Lower lobe of right lung (tissue), 2 donors: ENCODE measurements at regions of chr1 and their contacts with region 1.

Region 1: DNA sequence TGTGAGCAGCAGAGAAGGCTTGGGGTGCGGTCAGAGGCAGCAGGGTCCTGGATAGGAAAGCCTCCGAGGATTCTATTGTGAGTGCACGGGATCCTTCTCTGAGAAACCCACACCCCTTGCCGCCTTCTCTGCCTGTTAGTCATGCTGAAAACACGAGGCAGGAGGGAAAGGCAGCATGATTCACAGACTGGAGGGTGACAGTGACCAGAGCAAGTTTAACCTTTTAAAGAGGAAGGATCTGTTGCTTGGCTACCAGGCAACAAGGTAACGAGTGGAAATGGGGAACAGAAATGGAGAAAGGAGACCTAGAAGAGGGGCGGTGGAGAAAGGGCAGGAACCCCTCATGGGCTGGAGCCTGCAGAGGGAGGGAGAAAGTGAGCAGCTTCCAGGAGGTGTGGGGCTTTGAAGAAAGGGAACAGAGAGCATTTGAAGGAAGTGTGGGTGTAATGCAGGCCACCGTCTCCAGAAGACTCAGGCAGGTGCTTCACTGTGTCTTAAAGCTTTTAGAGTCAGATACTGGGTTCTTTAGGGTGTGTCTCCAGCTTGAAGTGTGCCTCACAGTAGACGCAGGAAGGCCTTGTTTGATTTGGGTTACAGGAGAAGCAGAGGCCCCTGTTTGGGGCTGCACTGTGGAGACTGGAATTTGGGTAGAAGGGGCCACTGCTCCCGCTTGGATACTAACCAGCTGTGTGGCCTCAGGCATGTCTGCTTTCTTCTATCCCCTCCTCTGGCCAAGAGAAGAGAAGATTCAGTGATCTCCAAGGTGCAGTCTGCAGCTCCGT is 19.1 kb downstream of the OPTC start:
- DNase-seq: no peak
- ATAC-seq: peak; percentile 70 to 71
- H3K4me3 ChIP-seq: no peak overlapping the region
- H3K27ac ChIP-seq: no peak overlapping the region
- H3K4me1 ChIP-seq: peaks cover 28% of the 10 kb centered on the region
- H3K27me3 ChIP-seq: no peaks in the 10 kb centered on the region
- CTCF ChIP-seq: no peak

Region 2: DNA sequence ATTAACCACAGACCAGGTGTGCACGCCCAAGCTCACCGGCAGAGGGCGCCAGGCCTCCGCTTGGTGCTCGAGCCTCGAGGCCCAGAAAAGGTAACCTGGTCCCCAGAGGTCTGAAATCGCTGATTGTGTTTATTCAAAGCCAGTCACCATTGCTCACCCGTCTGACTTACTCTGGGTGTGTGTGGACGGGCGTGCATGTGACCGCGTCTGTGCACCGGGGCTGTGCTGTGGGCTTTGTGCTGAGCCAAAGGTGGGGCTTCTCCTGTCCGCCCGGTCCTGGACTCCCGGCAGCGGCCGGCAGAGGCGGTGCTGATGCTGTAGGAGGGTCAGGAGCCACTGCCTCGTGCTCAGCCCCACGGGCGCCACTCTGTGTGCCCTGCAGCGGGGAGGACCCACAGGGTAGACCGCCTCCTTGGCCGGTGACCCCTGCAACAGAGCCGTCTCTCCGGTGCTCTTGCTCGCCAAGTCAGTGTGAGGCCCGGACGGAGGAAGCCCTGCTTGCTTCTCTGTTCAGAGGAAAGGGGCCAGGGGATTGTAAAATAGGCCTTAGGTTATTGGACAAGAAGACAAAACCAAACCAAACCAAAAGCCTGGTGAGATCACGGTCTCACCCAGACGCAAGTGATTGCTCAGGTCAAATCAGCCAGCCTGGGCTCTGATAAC is 239.7 kb before region 1 on chr1:
- intact Hi-C with region 1: no loop called
- DNase-seq: peak; percentile 92
- ATAC-seq: peak; percentile 86 to 88
- H3K4me3 ChIP-seq: peak overlapping the region; percentile 47
- H3K27ac ChIP-seq: peak overlapping the region; percentile 72
- H3K4me1 ChIP-seq: peaks cover 73% of the 10 kb centered on the region
- H3K27me3 ChIP-seq: no peaks in the 10 kb centered on the region
- CTCF ChIP-seq: peak; percentile 97

Region 3: DNA sequence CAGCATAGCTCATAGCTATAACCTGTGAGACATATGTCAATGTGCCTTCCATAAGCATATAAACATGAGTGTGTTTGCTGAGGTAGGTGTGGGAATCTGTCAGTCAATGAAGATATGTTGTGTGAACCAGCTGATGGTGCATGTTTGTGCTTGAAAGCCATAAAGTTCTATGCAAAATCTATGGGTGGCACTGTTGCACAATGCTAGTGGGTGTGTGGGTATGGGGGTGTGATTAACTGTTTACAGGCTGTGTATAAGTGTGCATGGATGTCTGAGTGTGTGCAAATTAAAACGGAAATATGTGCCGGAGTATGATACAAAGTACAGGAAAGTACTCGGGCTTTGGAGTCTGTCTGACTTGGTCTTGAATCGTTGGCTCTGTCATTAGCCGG is 112.6 kb after region 1 on chr1:
- intact Hi-C with region 1: loop called (anchors 10 kb)
- DNase-seq: no peak
- ATAC-seq: peak; percentile 57 to 58
- H3K4me3 ChIP-seq: no peak overlapping the region
- H3K27ac ChIP-seq: peak overlapping the region; percentile 43
- H3K4me1 ChIP-seq: peaks cover 35% of the 10 kb centered on the region
- H3K27me3 ChIP-seq: no peaks in the 10 kb centered on the region
- CTCF ChIP-seq: peak; percentile 46